GM12878 (cell line): ENCODE measurements at regions of chr7 and their contacts with region 1.

Region 1: DNA sequence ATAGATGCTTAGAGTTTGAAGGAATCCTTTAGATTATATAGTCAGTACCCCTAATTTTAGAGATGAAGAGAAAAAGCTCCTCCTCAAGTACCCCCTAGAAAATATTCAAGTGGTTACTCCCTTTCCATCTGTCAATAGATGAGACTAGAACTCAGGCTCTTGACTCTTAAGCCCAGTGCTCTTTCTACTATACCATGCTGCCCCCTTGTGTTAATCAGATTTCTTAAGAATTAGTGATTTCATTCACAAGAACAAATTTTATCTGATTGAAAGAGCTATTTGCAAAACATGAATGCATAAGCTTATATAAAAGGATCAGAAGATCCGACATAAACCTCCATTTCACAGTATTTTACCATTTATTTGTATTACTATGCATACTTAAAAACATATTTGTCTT is 179.3 kb downstream of the TFEC start:
- DNase-seq: no peak
- ATAC-seq: peak; percentile 57
- H3K4me3 ChIP-seq: no peak overlapping the region
- H3K27ac ChIP-seq: no peak overlapping the region
- H3K4me1 ChIP-seq: no peaks in the 10 kb centered on the region
- H3K27me3 ChIP-seq: no peaks in the 10 kb centered on the region; a peak in 1 of 4 replicates
- CTCF ChIP-seq: peak; percentile 13 to 55 (median 20); a peak in 4 of 6 replicates
- EP300 ChIP-seq: no peak
- POLR2A ChIP-seq: no peak
- RAD21 ChIP-seq: peak; percentile 73

Region 2: GRCh38 chr7:114085592-114086501 is 1765.4 kb before region 1 on chr7:
- CTCF ChIA-PET with region 1: interaction called, 9 read pairs
- POLR2A ChIA-PET with region 1: no interaction called
- RAD21 ChIA-PET with region 1: interaction called, 3 read pairs
- SMC1A ChIA-PET with region 1: interaction called, 5 read pairs
- in situ Hi-C with region 1: no loop called
- intact Hi-C with region 1: loop called (anchors 2 kb)
- DNase-seq: no peak
- ATAC-seq: peak; percentile 60
- H3K4me3 ChIP-seq: peak overlapping the region; percentile 68; the same call in 1 of the 2 replicates
- H3K27ac ChIP-seq: no peak overlapping the region
- H3K4me1 ChIP-seq: no peaks in the 10 kb centered on the region; the same call in 1 of the 2 replicates
- H3K27me3 ChIP-seq: peaks cover 6 to 36% of the 10 kb centered on the region in 2 experiments
- CTCF ChIP-seq: no peak
- EP300 ChIP-seq: no peak
- POLR2A ChIP-seq: no peak
- RAD21 ChIP-seq: no peak

Region 3: DNA sequence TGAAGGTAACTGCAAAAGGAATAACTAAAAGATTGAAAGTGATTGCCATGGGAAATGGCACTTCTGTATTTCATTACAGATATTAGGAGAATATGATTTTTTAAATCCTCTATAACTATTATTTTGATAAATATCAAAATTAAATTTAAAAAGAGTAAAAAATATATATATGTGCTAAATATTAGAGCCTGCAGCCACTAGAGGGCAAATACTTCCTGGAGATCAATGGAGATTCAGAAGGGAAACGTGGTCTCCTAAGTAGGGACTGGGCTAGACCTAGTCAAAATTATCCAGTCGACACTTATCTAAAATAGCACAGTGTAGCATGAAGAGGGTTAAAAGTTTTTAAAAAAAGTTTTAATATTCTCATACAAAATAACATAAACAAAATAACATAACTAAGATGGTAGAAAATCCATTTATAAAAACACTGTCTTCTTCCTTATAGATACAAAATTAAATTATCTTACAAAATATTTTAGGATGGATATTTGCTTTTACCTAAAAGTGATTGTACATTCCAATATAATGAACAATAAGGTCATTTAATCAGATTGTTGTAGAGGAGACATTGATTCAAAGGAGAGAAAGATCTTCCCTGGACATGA is 495.0 kb before region 1 on chr7:
- CTCF ChIA-PET with region 1: interaction called, 5 read pairs
- POLR2A ChIA-PET with region 1: no interaction called
- RAD21 ChIA-PET with region 1: no interaction called
- SMC1A ChIA-PET with region 1: no interaction called
- in situ Hi-C with region 1: no loop called
- intact Hi-C with region 1: loop called (anchors 5 kb)
- DNase-seq: no peak
- ATAC-seq: peak; percentile 55
- H3K4me3 ChIP-seq: no peak overlapping the region
- H3K27ac ChIP-seq: no peak overlapping the region
- H3K4me1 ChIP-seq: no peaks in the 10 kb centered on the region
- H3K27me3 ChIP-seq: no peaks in the 10 kb centered on the region
- CTCF ChIP-seq: peak; percentile 22 to 41 (median 37); a peak in 4 of 6 replicates
- EP300 ChIP-seq: no peak
- POLR2A ChIP-seq: no peak
- RAD21 ChIP-seq: peak; percentile 49

Region 4: DNA sequence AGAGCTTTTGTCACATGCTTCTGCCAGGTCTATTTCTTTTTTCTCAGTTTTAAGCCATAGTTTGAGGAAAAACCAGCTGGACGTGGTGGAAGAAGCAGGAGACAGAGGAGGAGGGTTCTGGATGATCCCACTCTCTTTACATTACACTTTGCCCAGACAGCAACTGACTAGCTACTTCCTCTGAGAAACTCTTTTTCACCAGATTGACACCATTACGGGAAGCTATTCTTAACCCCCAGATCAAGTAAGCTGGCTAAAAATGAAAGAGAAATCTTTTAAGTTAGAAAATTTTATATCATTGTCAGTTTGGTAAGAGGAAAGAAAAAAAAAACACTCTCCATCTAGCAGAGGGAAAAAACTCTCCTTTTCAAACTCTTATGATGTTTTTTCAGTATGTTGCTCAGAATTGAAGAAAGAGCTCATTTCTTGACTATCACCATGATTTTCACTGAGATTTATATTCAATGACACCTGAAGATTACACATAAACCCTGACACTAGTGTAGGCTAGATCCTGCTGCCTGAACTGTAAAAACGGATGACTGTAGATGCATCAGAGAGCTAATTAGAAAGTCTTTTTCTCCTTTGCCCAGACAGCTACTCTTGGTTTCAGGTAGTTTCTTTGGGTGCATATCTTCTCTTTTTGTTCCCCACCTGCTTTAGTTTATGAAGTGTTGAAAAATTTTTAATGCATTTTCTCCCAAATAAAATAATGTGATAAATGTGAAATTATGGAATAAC is 23.8 kb before region 1 on chr7:
- CTCF ChIA-PET with region 1: interaction called, 10 read pairs
- POLR2A ChIA-PET with region 1: interaction called, 3 read pairs
- RAD21 ChIA-PET with region 1: interaction called, 10 read pairs
- SMC1A ChIA-PET with region 1: interaction called, 15 read pairs
- in situ Hi-C with region 1: no loop called
- intact Hi-C with region 1: no loop called
- DNase-seq: no peak
- ATAC-seq: peak; percentile 36
- H3K4me3 ChIP-seq: no peak overlapping the region
- H3K27ac ChIP-seq: no peak overlapping the region
- H3K4me1 ChIP-seq: no peaks in the 10 kb centered on the region
- H3K27me3 ChIP-seq: no peaks in the 10 kb centered on the region
- CTCF ChIP-seq: no peak
- EP300 ChIP-seq: no peak
- POLR2A ChIP-seq: no peak
- RAD21 ChIP-seq: no peak

Region 5: DNA sequence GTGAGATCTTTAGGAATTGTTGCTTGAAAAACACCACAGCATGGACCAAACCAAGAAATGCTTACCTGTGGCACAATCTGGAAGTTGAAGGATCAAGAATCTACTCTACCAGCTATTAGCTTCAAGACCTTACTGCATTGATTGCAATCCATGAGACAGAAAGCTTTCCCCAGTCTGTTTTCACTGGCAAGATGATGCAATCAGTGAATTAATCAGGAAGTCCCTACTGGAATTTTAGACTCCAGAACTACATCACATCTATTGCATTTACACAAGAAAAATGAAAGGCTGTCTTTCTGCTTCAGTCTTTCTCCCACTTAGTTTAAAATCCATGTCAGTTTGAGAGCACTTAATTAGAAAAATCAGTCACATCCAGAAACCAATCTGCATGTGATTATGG is 12.5 kb before region 1 on chr7:
- CTCF ChIA-PET with region 1: interaction called, 16 read pairs
- POLR2A ChIA-PET with region 1: no interaction called
- RAD21 ChIA-PET with region 1: no interaction called
- SMC1A ChIA-PET with region 1: interaction called, 3 read pairs
- in situ Hi-C with region 1: no loop called
- intact Hi-C with region 1: no loop called
- DNase-seq: no peak
- ATAC-seq: no peak
- H3K4me3 ChIP-seq: no peak overlapping the region
- H3K27ac ChIP-seq: no peak overlapping the region
- H3K4me1 ChIP-seq: no peaks in the 10 kb centered on the region
- H3K27me3 ChIP-seq: no peaks in the 10 kb centered on the region
- CTCF ChIP-seq: no peak
- EP300 ChIP-seq: no peak
- POLR2A ChIP-seq: no peak
- RAD21 ChIP-seq: no peak

Region 6: DNA sequence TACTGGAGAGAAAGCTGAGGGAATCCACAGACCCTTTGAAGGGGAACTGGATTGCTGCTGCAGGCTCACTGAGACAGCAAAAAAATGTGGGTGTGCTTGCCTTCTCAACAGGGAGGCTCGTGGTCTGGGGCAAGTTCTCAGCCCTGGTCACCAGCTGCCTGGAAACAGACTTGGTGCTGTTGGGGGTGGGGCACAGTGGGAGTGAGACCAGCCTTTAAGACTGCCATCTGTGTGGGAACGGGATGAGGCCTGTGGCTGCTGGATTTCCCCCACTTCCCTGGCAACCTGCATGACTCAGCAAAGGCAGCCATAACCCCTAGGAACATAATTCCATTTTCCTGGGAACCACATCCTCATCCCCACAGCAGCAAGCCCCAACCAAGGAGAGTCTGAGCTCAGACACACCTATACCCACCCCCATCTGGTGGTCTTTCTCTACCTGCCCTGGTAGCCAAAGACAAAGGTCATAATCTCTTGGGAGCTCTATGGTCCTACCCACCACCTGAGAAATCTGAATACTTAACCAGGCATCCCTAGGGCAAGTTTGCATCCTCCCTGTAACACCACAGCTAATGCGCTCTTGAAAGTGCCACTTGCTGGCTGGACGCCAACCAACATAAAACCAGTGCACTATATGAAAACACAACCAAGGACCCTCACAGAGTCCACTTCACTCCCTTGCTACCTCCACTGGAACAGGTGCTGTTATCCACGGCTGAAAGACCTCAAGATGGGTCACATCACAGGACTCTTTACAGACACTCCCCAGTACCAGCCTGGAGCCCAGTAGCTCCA is 224.3 kb after region 1 on chr7:
- CTCF ChIA-PET with region 1: no interaction called
- POLR2A ChIA-PET with region 1: no interaction called
- RAD21 ChIA-PET with region 1: no interaction called
- SMC1A ChIA-PET with region 1: no interaction called
- in situ Hi-C with region 1: no loop called
- intact Hi-C with region 1: no loop called
- DNase-seq: no peak
- ATAC-seq: no peak
- H3K4me3 ChIP-seq: no peak overlapping the region
- H3K27ac ChIP-seq: no peak overlapping the region
- H3K4me1 ChIP-seq: no peaks in the 10 kb centered on the region
- H3K27me3 ChIP-seq: no peaks in the 10 kb centered on the region
- CTCF ChIP-seq: no peak
- EP300 ChIP-seq: no peak
- POLR2A ChIP-seq: no peak
- RAD21 ChIP-seq: no peak